Activated T-helper 1 cell treated with anti-CD3 and anti-CD28 coated beads, Interleukin-12 subunit alpha, Interleukin-12 subunit beta, Interleukin-2, Interleukin-4 antibody, amounts not matched to agents 30 ng/mL and 10 ng/mL and 1 ng/mL, durations not matched to agents 14 hours and 24 hours and 36 hours (primary cell): ENCODE measurements at regions of chr2 and their contacts with region 1.

Region 1: GRCh38 chr2:46062637-46063412 is 234.4 kb upstream of the EPAS1 start:
- DNase-seq: peak; percentile 46
- H3K4me3 Mint-ChIP-seq: no peak overlapping the region
- H3K27ac Mint-ChIP-seq: no peak overlapping the region
- H3K4me1 Mint-ChIP-seq: peaks cover 18% of the 10 kb centered on the region
- H3K27me3 Mint-ChIP-seq: no peaks in the 10 kb centered on the region

Region 2: GRCh38 chr2:46010925-46011490 is 51.8 kb before region 1 on chr2:
- intact Hi-C with region 1: loop called (anchors 1 kb)
- DNase-seq: no peak
- H3K4me3 Mint-ChIP-seq: no peak overlapping the region
- H3K27ac Mint-ChIP-seq: no peak overlapping the region
- H3K4me1 Mint-ChIP-seq: peaks cover 13% of the 10 kb centered on the region
- H3K27me3 Mint-ChIP-seq: no peaks in the 10 kb centered on the region

Region 3: GRCh38 chr2:46257476-46257875 is 194.7 kb after region 1 on chr2:
- intact Hi-C with region 1: no loop called
- DNase-seq: no peak
- H3K4me3 Mint-ChIP-seq: no peak overlapping the region
- H3K27ac Mint-ChIP-seq: no peak overlapping the region
- H3K4me1 Mint-ChIP-seq: no peaks in the 10 kb centered on the region
- H3K27me3 Mint-ChIP-seq: peaks cover 6% of the 10 kb centered on the region